CD4-positive, alpha-beta T cell (primary cell): ENCODE measurements at regions of chr2 and their contacts with region 1.

Region 1: DNA sequence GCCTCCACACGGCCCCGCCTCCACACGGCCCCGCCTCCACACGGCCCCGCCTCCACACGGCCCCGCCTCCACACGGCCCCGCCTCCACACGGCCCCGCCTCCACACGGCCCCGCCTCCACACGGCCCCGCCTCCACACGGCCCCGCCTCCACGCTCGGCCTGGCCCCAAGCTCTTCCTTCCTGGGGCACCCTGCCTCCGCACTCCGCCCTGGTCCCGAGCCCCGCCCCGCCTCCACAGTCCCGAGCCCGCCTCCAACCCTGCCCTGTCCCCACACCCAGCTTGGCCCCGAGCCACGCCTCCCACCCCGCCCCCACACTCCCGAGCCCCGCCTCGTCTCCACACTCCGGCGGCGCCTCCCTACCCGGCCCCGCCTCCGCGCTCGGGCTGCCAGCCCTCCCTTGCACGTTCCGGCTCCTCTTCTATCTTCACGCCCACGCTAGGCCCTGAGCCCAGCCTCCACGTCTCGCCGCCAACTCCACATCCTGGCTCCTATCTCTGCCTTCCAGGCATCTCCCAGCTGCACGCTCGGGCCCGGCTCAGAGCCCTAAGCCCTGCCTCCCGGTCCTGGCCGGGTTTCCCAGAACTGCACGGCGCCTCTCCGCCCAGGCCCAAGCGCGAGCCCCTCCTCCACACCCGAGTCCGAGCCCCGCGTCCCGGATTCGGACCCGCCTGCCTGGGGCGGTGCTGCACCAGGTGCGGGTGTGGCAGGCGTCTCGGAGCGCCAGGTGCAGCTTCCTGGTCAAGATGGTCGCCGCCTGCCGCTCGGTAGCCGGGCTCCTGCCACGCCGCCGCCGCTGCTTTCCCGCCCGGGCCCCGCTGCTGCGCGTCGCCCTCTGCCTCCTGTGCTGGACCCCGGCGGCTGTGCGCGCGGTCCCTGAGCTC is at the start of gene TMEM87B:
- DNase-seq: peak; percentile 97 to 100 (median 98)
- ATAC-seq: peak; percentile 69
- H3K4me3 ChIP-seq: peak within 1 kb of the TSS; percentile 93
- H3K4me3 Mint-ChIP-seq: peak within 1 kb of the TSS; percentile 94
- H3K27ac ChIP-seq: peak within 1 kb of the TSS; percentile 77 to 87
- H3K27ac Mint-ChIP-seq: peak within 1 kb of the TSS; percentile 89
- H3K4me1 ChIP-seq: peaks cover 35% of the 10 kb centered on the region
- H3K4me1 Mint-ChIP-seq: peaks cover 43% of the 10 kb centered on the region
- H3K27me3 ChIP-seq: no peaks in the 10 kb centered on the region
- H3K27me3 Mint-ChIP-seq: no peaks in the 10 kb centered on the region
- CTCF ChIP-seq: no peak
- total RNA-seq, gene TMEM87B: 8.9 to 12.1 TPM

Region 2: DNA sequence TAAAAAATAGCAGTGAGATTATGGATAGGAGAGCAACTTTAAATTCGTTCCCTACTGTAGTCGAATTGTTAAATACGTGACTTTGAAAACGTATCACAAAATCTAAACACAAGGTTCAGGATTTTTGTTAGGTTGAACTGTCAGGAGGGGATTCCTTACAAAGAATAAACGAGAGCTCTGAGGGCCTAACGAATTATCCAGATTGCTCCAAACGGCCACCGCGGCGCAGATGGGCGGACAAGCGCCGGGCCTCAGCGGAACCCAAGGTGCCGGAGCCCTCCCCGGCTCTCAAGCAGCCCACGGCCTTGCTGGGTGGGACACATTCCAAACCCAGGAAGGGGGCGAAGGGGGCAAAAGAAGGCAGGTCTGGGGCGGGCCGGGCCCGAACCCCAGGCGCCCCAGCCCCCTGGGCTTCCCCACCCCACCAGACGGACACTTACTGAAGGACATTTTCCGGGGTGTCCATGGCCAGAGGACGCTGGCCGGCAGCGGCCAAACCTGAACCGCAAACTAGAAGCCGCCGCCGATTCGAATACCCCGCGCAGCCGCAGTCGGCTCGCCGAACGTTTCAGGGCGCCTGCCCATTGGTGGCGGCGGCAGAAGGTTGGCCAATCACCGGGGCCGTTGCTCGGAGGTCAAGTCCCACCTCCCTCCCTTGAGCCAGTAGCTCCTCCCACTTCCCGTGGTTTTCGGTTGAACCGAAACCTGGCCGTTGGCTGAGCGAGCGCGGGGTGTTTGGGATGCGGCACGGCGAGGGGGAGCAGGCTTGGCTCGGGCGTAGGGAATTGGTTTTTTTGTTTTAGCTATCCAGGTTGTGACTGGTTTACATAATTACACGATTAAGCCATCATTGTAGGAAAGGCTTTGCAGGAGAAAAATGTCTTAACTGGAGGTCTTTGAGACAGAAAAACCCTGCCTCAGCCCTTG is 1377.3 kb before region 1 on chr2 and contains the start of gene BUB1:
- CTCF ChIA-PET with region 1: no interaction called
- POLR2A ChIA-PET with region 1: no interaction called
- intact Hi-C with region 1: loop called in 1 of 2 experiments (anchors 5 kb)
- DNase-seq: peak; percentile 90 to 98 (median 94)
- ATAC-seq: peak; percentile 98
- H3K4me3 ChIP-seq: peak within 1 kb of the TSS; percentile 93
- H3K4me3 Mint-ChIP-seq: peak within 1 kb of the TSS; percentile 98
- H3K27ac ChIP-seq: peak within 1 kb of the TSS; percentile 55 to 63
- H3K27ac Mint-ChIP-seq: peak within 1 kb of the TSS; percentile 89
- H3K4me1 ChIP-seq: peaks cover 27% of the 10 kb centered on the region
- H3K4me1 Mint-ChIP-seq: peaks cover 21% of the 10 kb centered on the region
- H3K27me3 ChIP-seq: no peaks in the 10 kb centered on the region
- H3K27me3 Mint-ChIP-seq: no peaks in the 10 kb centered on the region
- CTCF ChIP-seq: no peak
- total RNA-seq, gene BUB1: 1.6 to 3.5 TPM

Region 3: GRCh38 chr2:111659416-111660281 is 395.4 kb before region 1 on chr2:
- CTCF ChIA-PET with region 1: no interaction called
- POLR2A ChIA-PET with region 1: no interaction called
- intact Hi-C with region 1: no loop called
- DNase-seq: peak in 2 of 14 experiments; percentile 58 to 67
- ATAC-seq: no peak
- H3K4me3 ChIP-seq: no peak overlapping the region
- H3K4me3 Mint-ChIP-seq: no peak overlapping the region
- H3K27ac ChIP-seq: no peak overlapping the region
- H3K27ac Mint-ChIP-seq: no peak overlapping the region
- H3K4me1 ChIP-seq: peaks cover 7% of the 10 kb centered on the region
- H3K4me1 Mint-ChIP-seq: no peaks in the 10 kb centered on the region
- H3K27me3 ChIP-seq: no peaks in the 10 kb centered on the region
- H3K27me3 Mint-ChIP-seq: no peaks in the 10 kb centered on the region
- CTCF ChIP-seq: no peak

Region 4: GRCh38 chr2:111883661-111884591 is 171.2 kb before region 1 on chr2 and contains the start of gene ANAPC1:
- CTCF ChIA-PET with region 1: interaction called, 17 read pairs
- POLR2A ChIA-PET with region 1: interaction called, 11 read pairs
- intact Hi-C with region 1: no loop called
- DNase-seq: peak; percentile 72 to 90 (median 80)
- ATAC-seq: peak; percentile 96
- H3K4me3 ChIP-seq: peak within 1 kb of the TSS; percentile 83
- H3K4me3 Mint-ChIP-seq: peak within 1 kb of the TSS; percentile 90
- H3K27ac ChIP-seq: peak within 1 kb of the TSS; percentile 73 to 84
- H3K27ac Mint-ChIP-seq: peak within 1 kb of the TSS; percentile 93
- H3K4me1 ChIP-seq: peaks cover 17% of the 10 kb centered on the region
- H3K4me1 Mint-ChIP-seq: peaks cover 17% of the 10 kb centered on the region
- H3K27me3 ChIP-seq: no peaks in the 10 kb centered on the region
- H3K27me3 Mint-ChIP-seq: no peaks in the 10 kb centered on the region
- CTCF ChIP-seq: no peak
- total RNA-seq, gene ANAPC1: 34.0 to 39.5 TPM

Region 5: GRCh38 chr2:112187805-112188596 is 132.9 kb after region 1 on chr2:
- CTCF ChIA-PET with region 1: no interaction called
- POLR2A ChIA-PET with region 1: interaction called, 13 read pairs
- intact Hi-C with region 1: loop called in 1 of 2 experiments (anchors 10 kb)
- DNase-seq: peak; percentile 59 to 93 (median 72)
- ATAC-seq: peak; percentile 82
- H3K4me3 ChIP-seq: peak overlapping the region; percentile 28
- H3K4me3 Mint-ChIP-seq: peak overlapping the region; percentile 56
- H3K27ac ChIP-seq: peak overlapping the region; percentile 90 to 96
- H3K27ac Mint-ChIP-seq: peak overlapping the region; percentile 94
- H3K4me1 ChIP-seq: peaks cover 79% of the 10 kb centered on the region
- H3K4me1 Mint-ChIP-seq: peaks cover 84% of the 10 kb centered on the region
- H3K27me3 ChIP-seq: no peaks in the 10 kb centered on the region
- H3K27me3 Mint-ChIP-seq: no peaks in the 10 kb centered on the region
- CTCF ChIP-seq: no peak

Region 6: GRCh38 chr2:112275306-112275886 is 220.3 kb after region 1 on chr2 and contains the start of gene ZC3H6:
- CTCF ChIA-PET with region 1: no interaction called
- POLR2A ChIA-PET with region 1: interaction called, 8 read pairs
- intact Hi-C with region 1: loop called in 1 of 2 experiments (anchors 5 kb)
- DNase-seq: peak; percentile 97 to 100 (median 100)
- ATAC-seq: peak; percentile 90
- H3K4me3 ChIP-seq: peak within 1 kb of the TSS; percentile 94
- H3K4me3 Mint-ChIP-seq: peak within 1 kb of the TSS; percentile 98
- H3K27ac ChIP-seq: peak within 1 kb of the TSS; percentile 100
- H3K27ac Mint-ChIP-seq: peak within 1 kb of the TSS; percentile 100
- H3K4me1 ChIP-seq: peaks cover 8% of the 10 kb centered on the region
- H3K4me1 Mint-ChIP-seq: peaks cover 33% of the 10 kb centered on the region
- H3K27me3 ChIP-seq: no peaks in the 10 kb centered on the region
- H3K27me3 Mint-ChIP-seq: no peaks in the 10 kb centered on the region
- CTCF ChIP-seq: no peak
- total RNA-seq, gene ZC3H6: 18.0 to 21.4 TPM

Region 7: DNA sequence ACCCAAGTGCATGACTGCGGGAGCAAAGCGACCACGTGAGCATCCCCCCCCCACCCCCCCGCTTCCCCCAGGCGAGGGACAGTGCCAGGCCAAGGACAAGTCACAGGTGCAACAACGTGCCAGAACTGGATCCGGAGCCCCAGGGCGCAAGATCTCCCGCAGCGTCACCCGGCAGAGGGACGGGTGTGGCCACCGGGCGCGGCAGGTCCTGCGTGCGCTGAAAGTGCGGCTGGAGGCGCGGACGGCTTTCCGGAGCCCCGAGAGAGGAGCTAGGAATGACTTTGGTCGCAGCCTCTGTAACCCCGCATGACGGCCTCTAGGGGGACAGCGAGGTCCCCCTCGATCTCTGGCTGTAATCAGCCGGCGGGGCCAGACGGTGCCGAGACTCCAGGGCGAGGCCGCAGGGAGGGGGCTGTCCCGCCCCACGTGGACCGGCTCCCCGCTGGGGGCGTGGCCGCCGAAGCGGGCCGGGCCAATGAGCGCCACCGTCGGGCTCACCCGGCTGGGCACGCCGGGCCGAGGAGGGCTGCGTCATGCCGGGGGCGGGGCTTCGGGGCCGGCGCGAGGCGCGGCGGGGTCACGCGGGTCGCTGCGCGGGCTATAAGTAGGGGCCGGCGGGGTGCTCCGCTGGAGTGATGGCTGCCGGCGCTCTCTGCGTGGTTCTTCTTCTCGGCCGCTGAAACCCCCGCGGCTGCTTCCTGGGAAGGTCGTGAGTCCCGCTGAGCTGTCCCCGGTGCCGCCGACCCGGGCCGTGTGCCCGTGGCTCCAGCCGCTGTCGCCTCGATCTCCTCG is 590.4 kb after region 1 on chr2 and contains the start of gene SLC20A1:
- CTCF ChIA-PET with region 1: no interaction called
- POLR2A ChIA-PET with region 1: interaction called, 3 read pairs
- intact Hi-C with region 1: loop called in 1 of 2 experiments (anchors 5 kb)
- DNase-seq: peak; percentile 93 to 100 (median 98)
- ATAC-seq: peak; percentile 89
- H3K4me3 ChIP-seq: peak within 1 kb of the TSS; percentile 81
- H3K4me3 Mint-ChIP-seq: peak within 1 kb of the TSS; percentile 93
- H3K27ac ChIP-seq: peak within 1 kb of the TSS; percentile 79 to 85
- H3K27ac Mint-ChIP-seq: peak within 1 kb of the TSS; percentile 85
- H3K4me1 ChIP-seq: peaks cover 47% of the 10 kb centered on the region
- H3K4me1 Mint-ChIP-seq: peaks cover 54% of the 10 kb centered on the region
- H3K27me3 ChIP-seq: no peaks in the 10 kb centered on the region
- H3K27me3 Mint-ChIP-seq: no peaks in the 10 kb centered on the region
- CTCF ChIP-seq: peak; percentile 10
- total RNA-seq, gene SLC20A1: 130 to 139 TPM